ENCODE measurements at regions of chr3 and their contacts with region 1.

Region 1: GRCh38 chr3:66472313-66473134 is 28.3 kb downstream of the LRIG1 start:
- DNase-seq: peak in 1 of 3 donors; percentile 56
- ATAC-seq: peak; percentile 75
- H3K4me3 ChIP-seq: no peak overlapping the region
- H3K4me1 ChIP-seq: peaks cover 65% of the 10 kb centered on the region
- CTCF ChIP-seq: no peak

Region 2: GRCh38 chr3:66428733-66429132 is 43.8 kb before region 1 on chr3:
- intact Hi-C with region 1: loop called in 1 of 2 experiments (anchors 10 kb)
- DNase-seq: peak in 1 of 3 donors; percentile 40
- ATAC-seq: peak; percentile 72
- H3K4me3 ChIP-seq: no peak overlapping the region
- H3K4me1 ChIP-seq: peaks cover 12% of the 10 kb centered on the region
- CTCF ChIP-seq: no peak

Region 3: DNA sequence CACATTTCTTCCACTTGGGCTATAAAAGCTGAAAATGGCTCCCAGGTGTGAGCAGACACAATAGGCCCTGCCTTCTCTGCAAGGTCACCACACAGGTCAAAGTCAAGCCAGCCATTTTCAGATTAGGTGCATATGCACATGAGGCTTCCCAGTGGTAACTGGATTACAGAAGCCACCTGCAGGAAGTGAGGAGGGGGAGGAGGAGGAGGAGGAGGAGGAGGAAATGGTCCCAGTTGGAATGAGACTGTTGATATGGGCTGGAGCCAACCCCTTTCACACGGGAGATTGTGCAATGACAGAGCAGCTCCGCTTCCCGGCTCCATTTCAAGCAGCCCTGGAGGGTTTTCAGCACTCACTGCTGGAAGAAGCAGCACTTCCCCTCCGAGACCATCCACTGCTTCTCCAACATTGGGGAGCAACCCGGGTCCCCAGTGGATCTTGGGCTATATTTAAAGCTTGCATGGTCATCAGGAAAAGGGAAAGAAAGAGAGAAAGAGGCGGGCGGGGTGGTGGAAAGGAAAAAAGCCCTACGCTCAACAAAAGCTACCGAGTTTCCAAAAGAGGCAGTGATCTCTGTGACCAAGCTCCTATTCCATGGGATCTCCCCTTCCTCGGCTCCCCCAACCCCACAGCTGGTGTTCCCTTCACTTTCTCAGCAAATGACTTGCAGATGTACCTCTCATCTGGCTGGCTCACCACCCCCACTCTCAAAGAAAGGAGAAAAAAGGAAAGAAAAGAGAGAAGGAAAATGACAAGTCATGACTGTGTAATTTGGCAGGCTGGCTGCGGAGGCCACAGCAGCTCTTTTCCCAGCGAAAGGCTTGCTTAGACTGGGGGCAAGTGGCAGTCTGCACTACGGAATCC is 30.0 kb before region 1 on chr3:
- intact Hi-C with region 1: loop called in 1 of 2 experiments (anchors 5 kb)
- DNase-seq: peak; percentile 68 to 82 (median 70)
- ATAC-seq: peak; percentile 90
- H3K4me3 ChIP-seq: no peak overlapping the region
- H3K4me1 ChIP-seq: peaks cover 59% of the 10 kb centered on the region
- CTCF ChIP-seq: no peak

Region 4: DNA sequence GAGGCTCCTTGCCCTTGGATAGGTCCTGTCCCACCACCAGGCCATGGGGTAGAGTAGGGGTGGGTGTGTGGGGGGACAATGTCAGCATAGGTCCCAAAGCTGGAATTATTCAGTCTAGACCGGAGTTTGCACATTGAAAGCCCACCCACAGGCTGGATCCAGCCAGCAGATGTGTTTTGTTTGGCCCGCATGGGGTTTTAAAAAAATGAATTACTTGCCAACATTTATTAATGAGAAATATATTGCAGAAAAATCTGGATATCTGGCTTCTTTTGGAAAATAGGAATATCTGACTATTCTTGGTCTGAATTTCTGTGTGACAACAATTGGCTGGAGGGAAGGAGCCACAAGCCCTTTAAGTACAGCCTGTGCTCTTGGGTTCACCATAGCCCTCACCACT is 45.6 kb after region 1 on chr3:
- intact Hi-C with region 1: no loop called
- DNase-seq: no peak
- ATAC-seq: no peak
- H3K4me3 ChIP-seq: no peak overlapping the region
- H3K4me1 ChIP-seq: no peaks in the 10 kb centered on the region
- CTCF ChIP-seq: no peak

Region 5: DNA sequence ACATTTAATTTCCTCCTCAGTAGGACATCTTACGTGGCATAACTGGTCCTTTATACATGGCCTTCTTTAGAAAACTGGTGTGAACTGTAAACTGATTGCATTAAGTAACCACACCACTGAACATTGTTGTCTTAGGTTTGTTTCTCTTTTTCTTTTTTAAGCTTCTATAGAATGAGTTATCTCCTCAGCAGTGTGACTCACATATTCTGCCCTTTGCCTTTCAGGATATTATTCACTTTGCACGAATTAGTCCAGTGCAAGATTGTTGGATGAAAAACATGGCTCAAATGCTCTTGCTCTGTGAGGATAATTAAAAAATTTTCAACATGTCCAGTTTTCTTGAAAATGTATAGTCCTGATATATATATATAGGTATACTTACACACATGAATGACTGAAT is 673.2 kb after region 1 on chr3:
- intact Hi-C with region 1: no loop called
- DNase-seq: no peak
- ATAC-seq: no peak
- H3K4me3 ChIP-seq: no peak overlapping the region
- H3K4me1 ChIP-seq: no peaks in the 10 kb centered on the region
- CTCF ChIP-seq: no peak